SK-N-SH (cell line): ENCODE measurements at regions of chr17 and their contacts with region 1.

Region 1: DNA sequence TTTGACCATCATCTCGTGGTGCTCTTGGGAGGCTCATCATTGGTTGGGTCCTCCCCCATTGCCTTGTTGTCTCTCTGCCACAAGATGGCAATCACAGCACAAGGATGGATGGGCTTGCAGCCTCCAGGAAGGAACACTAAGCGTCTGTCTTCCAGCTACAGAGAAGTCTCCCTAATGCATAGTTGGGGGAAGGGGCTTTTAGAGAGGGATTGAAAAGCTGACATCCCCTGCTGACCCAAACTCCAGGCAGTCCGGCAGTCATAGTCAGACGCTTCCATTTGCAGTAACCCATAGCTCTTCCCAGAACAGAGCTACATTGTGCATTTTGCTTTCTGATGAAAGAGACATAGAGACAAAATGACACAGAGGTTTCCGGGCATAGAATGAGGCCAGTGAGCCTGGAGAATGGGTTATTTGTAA is 111.4 kb downstream of the UTP18 start:
- DNase-seq: peak; percentile 85
- H3K4me3 ChIP-seq: peak overlapping the region in 1 of 2 experiments; percentile 10; a peak in 1 of 4 replicates
- H3K27ac ChIP-seq: peak overlapping the region in 1 of 2 experiments; percentile 4; a peak in 1 of 4 replicates
- H3K4me1 ChIP-seq: peaks cover 0 to 16% of the 10 kb centered on the region in 2 experiments; a peak in 1 of 4 replicates
- H3K27me3 ChIP-seq: no peaks in the 10 kb centered on the region
- CTCF ChIP-seq: peak; percentile 57
- EP300 ChIP-seq: no peak
- RAD21 ChIP-seq: peak; percentile 100

Region 2: GRCh38 chr17:51238255-51238887 is 133.4 kb before region 1 on chr17:
- CTCF ChIA-PET with region 1: no interaction called
- POLR2A ChIA-PET with region 1: no interaction called
- DNase-seq: no peak
- H3K4me3 ChIP-seq: no peak overlapping the region
- H3K27ac ChIP-seq: no peak overlapping the region
- H3K4me1 ChIP-seq: no peaks in the 10 kb centered on the region
- H3K27me3 ChIP-seq: no peaks in the 10 kb centered on the region
- CTCF ChIP-seq: no peak
- EP300 ChIP-seq: no peak
- RAD21 ChIP-seq: no peak

Region 3: GRCh38 chr17:51355441-51356410 is 16.0 kb before region 1 on chr17:
- CTCF ChIA-PET with region 1: interaction called, 23 read pairs
- POLR2A ChIA-PET with region 1: no interaction called
- DNase-seq: peak; percentile 84
- H3K4me3 ChIP-seq: peak overlapping the region in 1 of 2 experiments; percentile 20; a peak in 2 of 4 replicates
- H3K27ac ChIP-seq: peak overlapping the region; percentile 30 to 99; a peak in 3 of 4 replicates
- H3K4me1 ChIP-seq: peaks cover 0 to 41% of the 10 kb centered on the region in 2 experiments; a peak in 2 of 4 replicates
- H3K27me3 ChIP-seq: no peaks in the 10 kb centered on the region
- CTCF ChIP-seq: no peak
- EP300 ChIP-seq: peak in 1 of 2 experiments; percentile 91; a peak in 2 of 4 replicates
- RAD21 ChIP-seq: peak; percentile 51

Region 4: DNA sequence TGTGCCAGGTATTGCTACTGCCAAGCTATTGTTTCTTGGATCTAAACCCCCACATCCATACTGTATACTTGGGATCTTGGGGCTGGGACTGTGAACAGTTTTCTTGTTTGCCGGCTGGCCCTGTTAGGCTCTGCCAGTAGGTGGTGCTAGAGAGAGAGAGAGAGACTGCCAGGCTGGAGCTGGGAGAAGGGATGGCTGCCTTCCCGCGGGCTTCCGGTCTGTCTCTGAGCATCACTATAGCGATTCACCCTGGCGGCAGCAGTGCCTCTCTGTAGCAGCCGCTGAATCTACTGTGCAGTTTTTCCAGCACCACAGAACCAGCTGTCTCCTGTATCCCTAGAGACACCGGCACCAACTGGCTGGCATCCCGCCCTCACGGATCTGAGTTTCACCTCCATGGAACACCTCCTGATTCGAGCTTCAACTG is 89.8 kb after region 1 on chr17:
- CTCF ChIA-PET with region 1: interaction called, 12 read pairs
- POLR2A ChIA-PET with region 1: no interaction called
- DNase-seq: peak; percentile 48
- H3K4me3 ChIP-seq: peak overlapping the region in 1 of 2 experiments; percentile 36; a peak in 1 of 4 replicates
- H3K27ac ChIP-seq: no peak overlapping the region
- H3K4me1 ChIP-seq: no peaks in the 10 kb centered on the region
- H3K27me3 ChIP-seq: no peaks in the 10 kb centered on the region
- CTCF ChIP-seq: peak; percentile 60
- EP300 ChIP-seq: no peak
- RAD21 ChIP-seq: peak; percentile 62

Region 5: GRCh38 chr17:51533219-51533618 is 161.5 kb after region 1 on chr17:
- CTCF ChIA-PET with region 1: interaction called, 64 read pairs
- POLR2A ChIA-PET with region 1: no interaction called
- DNase-seq: no peak
- H3K4me3 ChIP-seq: no peak overlapping the region
- H3K27ac ChIP-seq: no peak overlapping the region
- H3K4me1 ChIP-seq: peaks cover 0 to under 1% of the 10 kb centered on the region in 2 experiments; a peak in 2 of 4 replicates
- H3K27me3 ChIP-seq: no peaks in the 10 kb centered on the region
- CTCF ChIP-seq: no peak
- EP300 ChIP-seq: no peak
- RAD21 ChIP-seq: no peak

Region 6: DNA sequence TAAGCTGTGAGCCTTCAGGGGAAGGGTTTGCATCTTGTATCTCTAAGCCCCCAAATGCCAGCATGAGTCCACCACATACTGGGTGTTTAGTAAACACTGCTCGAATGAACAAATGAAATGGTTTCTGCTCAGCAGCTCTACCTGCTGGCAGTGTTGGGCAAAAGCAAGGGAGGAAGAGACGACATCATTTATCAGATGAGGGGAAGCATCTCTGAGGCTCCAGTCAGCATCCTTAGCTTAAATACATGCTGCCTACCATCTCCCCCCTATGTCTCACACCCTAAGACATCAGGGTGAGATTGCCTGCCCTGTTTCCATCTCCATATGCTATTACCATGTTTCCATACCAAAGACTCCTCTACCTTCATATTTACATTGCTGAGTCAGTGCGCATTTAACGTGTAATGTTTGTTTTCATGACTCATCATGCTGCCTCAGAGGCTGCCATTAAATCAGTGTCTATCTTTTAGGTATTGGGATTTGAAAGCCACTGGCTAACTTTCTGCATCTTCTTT is 268.4 kb after region 1 on chr17:
- CTCF ChIA-PET with region 1: interaction called, 25 read pairs
- POLR2A ChIA-PET with region 1: no interaction called
- DNase-seq: peak; percentile 27
- H3K4me3 ChIP-seq: no peak overlapping the region
- H3K27ac ChIP-seq: no peak overlapping the region
- H3K4me1 ChIP-seq: no peaks in the 10 kb centered on the region
- H3K27me3 ChIP-seq: no peaks in the 10 kb centered on the region
- CTCF ChIP-seq: no peak
- EP300 ChIP-seq: no peak
- RAD21 ChIP-seq: peak; percentile 61